GM12878 (cell line): ENCODE measurements at regions of chr17 and their contacts with region 1.

Region 1: GRCh38 chr17:4908301-4908700 is 5.4 kb upstream of the CHRNE start:
- DNase-seq: no peak
- ATAC-seq: no peak
- H3K4me3 ChIP-seq: no peak overlapping the region
- H3K27ac ChIP-seq: no peak overlapping the region
- H3K4me1 ChIP-seq: peaks cover 7% of the 10 kb centered on the region
- H3K27me3 ChIP-seq: no peaks in the 10 kb centered on the region; a peak in 1 of 4 replicates
- CTCF ChIP-seq: no peak
- EP300 ChIP-seq: no peak
- POLR2A ChIP-seq: no peak
- RAD21 ChIP-seq: no peak

Region 2: DNA sequence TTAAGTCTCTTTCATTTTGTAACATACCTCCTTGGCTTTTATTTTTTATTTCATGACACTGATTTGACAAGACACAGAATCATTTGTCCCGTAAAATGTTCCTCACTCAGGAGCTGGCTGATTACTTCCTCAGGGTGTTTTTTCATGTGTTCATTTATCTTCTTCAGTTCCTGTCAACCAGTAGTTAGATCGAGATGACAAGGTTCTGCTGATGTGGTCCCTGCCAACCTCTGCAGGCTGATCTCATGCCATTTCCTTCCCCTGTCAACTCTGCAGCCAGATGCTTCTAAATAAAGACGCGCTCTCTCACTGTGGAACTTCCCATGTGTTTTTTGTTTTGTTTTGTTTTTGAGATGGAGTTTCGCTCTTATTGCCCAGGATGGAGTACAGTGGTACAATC is 160.5 kb before region 1 on chr17:
- CTCF ChIA-PET with region 1: no interaction called
- POLR2A ChIA-PET with region 1: no interaction called
- RAD21 ChIA-PET with region 1: no interaction called
- SMC1A ChIA-PET with region 1: no interaction called
- in situ Hi-C with region 1: no loop called
- intact Hi-C with region 1: no loop called
- DNase-seq: no peak
- ATAC-seq: peak; percentile 64
- H3K4me3 ChIP-seq: no peak overlapping the region
- H3K27ac ChIP-seq: no peak overlapping the region
- H3K4me1 ChIP-seq: peaks cover 4% of the 10 kb centered on the region; the same call in 1 of the 2 replicates
- H3K27me3 ChIP-seq: no peaks in the 10 kb centered on the region
- CTCF ChIP-seq: no peak
- EP300 ChIP-seq: no peak
- POLR2A ChIP-seq: no peak
- RAD21 ChIP-seq: no peak

Region 3: DNA sequence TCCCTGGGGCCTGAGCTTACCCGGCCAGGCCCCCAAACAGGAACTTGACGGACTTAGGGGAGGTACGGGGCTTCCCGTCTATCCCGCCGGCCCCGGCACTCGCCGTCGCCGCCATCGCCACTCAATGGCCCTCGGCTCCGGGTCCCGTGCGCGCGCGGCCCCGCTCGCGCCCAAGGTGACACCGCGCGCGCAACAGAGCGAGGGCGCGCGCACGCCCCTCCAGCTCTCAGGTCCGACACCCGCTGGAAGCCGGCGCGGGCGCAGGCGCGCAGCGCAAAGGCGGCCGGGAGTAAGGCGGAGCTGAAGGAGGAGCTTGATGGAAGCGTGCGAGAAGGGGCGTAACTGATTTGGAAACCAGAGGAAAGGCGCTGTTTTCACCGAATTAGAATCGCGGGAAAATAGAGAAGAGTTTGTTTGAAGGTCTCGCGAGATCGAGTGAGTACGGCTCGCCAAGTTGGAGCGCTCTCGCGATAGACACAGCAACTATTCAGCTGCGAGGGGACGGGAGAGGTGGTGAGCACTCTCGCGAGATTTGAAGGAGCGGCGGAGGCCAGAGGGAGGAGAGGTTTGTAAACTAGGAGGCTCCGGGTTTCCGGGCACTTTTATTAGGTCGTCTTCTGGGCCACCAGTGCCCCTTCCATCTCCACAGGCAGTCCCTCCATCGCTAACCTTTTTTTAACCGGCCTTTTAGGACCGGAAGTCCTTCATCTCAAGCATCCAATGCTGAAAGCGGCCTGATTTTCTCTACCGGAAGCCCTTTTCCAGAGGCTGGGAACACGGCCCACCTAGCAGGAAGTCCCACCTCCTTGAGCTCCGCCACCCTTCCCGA is 31.7 kb after region 1 on chr17 and contains the starts of genes RNF167 and SLC25A11:
- CTCF ChIA-PET with region 1: interaction called, 18 read pairs
- POLR2A ChIA-PET with region 1: interaction called, 4 read pairs
- RAD21 ChIA-PET with region 1: interaction called, 14 read pairs
- SMC1A ChIA-PET with region 1: interaction called, 6 read pairs
- in situ Hi-C with region 1: no loop called
- intact Hi-C with region 1: no loop called
- DNase-seq: peak; percentile 100
- ATAC-seq: peak; percentile 83
- H3K4me3 ChIP-seq: peak within 1 kb of the TSS; percentile 92
- H3K27ac ChIP-seq: peak within 1 kb of the TSS; percentile 97
- H3K4me1 ChIP-seq: peaks cover 41% of the 10 kb centered on the region
- H3K27me3 ChIP-seq: no peaks in the 10 kb centered on the region
- CTCF ChIP-seq: no peak
- EP300 ChIP-seq: no peak
- POLR2A ChIP-seq: peak; percentile 88
- RAD21 ChIP-seq: no peak
- polyA plus RNA-seq, gene RNF167: 33.6 to 35.3 TPM
- polyA plus RNA-seq, gene SLC25A11: 5.8 to 10.9 TPM

Region 4: DNA sequence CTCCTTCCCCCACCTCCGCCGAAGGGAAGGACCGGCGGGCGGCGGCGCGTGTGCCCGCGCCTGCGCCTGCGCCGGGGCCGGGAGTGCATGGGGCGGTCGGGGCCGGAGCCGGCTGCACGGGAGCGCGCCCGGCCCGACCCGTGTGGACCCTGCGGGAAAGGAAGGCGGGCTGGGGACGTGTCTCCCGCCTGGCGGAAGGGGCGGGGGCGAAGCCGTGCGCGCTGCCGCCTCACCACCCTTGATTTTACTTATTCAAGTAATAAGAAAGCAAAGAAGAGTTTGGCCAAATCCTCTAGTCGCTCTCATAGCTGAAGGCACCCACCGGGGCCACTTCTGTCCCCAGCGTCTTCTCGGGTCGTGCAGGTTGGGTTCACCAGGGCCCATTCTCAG is 40.6 kb after region 1 on chr17:
- CTCF ChIA-PET with region 1: interaction called, 14 read pairs
- POLR2A ChIA-PET with region 1: no interaction called
- RAD21 ChIA-PET with region 1: interaction called, 4 read pairs
- SMC1A ChIA-PET with region 1: interaction called, 6 read pairs
- in situ Hi-C with region 1: no loop called
- intact Hi-C with region 1: no loop called
- DNase-seq: no peak
- ATAC-seq: peak; percentile 51
- H3K4me3 ChIP-seq: peak overlapping the region; percentile 96
- H3K27ac ChIP-seq: peak overlapping the region; percentile 85
- H3K4me1 ChIP-seq: peaks cover 33% of the 10 kb centered on the region
- H3K27me3 ChIP-seq: no peaks in the 10 kb centered on the region
- CTCF ChIP-seq: no peak
- EP300 ChIP-seq: no peak
- POLR2A ChIP-seq: no peak
- RAD21 ChIP-seq: no peak

Region 5: DNA sequence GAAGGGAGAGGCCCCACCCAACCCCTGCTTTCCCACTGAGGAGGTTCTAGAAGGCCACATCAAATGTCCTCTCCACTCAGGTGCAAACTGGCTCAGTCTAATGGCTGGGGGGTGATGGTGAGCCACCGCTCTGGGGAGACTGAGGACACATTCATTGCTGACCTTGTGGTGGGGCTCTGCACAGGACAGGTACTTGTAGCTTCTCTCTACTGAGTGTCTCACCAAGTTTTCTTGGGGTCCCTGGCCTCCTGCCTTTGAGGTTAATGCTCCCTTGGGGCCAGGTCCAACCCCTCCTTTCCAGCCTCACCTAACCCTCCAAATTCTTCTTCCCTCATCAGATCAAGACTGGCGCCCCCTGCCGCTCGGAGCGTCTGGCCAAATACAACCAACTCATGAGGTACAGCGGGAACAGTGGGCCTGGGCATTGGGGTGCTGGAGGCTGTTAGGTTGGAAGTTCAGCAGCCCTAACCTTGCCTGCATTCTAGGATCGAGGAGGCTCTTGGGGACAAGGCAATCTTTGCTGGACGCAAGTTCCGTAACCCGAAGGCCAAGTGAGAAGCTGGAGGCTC is 48.3 kb after region 1 on chr17:
- CTCF ChIA-PET with region 1: interaction called, 21 read pairs
- POLR2A ChIA-PET with region 1: no interaction called
- RAD21 ChIA-PET with region 1: interaction called, 3 read pairs
- SMC1A ChIA-PET with region 1: interaction called, 3 read pairs
- in situ Hi-C with region 1: no loop called
- intact Hi-C with region 1: no loop called
- DNase-seq: no peak
- ATAC-seq: peak; percentile 54; the same call in 2 of the 3 replicates
- H3K4me3 ChIP-seq: no peak overlapping the region
- H3K27ac ChIP-seq: no peak overlapping the region
- H3K4me1 ChIP-seq: peaks cover 3% of the 10 kb centered on the region
- H3K27me3 ChIP-seq: no peaks in the 10 kb centered on the region
- CTCF ChIP-seq: peak; percentile 33 to 54 (median 41)
- EP300 ChIP-seq: no peak
- POLR2A ChIP-seq: no peak
- RAD21 ChIP-seq: no peak

Region 6: DNA sequence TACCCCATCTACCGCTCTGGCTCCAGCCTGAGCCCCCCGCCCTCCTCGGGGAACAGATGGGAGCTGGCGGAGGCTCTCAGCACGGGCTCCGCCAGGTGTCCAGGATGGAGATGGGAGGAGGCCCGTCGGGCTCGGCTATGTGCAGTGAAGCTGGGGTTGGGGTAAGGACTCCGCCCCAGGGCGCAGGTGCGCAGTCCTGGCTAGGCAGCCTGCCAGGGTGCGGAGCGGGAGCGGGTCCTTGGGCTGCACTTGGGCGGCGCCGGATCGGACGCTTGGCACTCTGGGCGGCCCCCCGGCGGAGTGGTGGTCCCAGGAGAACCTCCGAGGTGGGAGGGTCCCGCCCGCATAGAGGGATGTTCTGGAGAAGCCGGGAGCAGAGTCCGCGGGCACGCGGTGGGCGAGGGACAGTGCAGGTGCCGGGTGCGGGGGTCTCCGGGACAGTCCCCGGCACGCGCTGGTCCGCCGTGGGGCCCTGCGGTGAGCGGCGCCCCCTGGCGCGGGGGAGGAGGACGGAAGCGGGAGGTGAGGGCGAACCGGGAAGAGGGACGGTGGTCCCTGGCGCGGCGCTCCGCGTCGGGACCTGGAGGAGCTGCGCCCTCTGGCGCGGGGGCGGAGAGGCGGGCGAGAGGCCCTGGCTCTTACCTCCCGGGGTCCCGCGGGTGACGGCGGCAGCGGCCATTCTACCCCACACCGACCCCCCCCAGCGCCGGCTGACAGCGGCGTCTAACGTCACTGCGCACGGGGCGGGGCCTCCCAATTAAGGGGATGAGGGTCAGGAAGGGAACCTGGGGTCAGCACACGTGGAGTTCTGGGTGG is 78.9 kb after region 1 on chr17 and contains the start of gene CAMTA2:
- CTCF ChIA-PET with region 1: interaction called, 19 read pairs
- POLR2A ChIA-PET with region 1: interaction called, 3 read pairs
- RAD21 ChIA-PET with region 1: interaction called, 4 read pairs
- SMC1A ChIA-PET with region 1: interaction called, 4 read pairs
- in situ Hi-C with region 1: no loop called
- intact Hi-C with region 1: no loop called
- DNase-seq: no peak
- ATAC-seq: peak; percentile 92
- H3K4me3 ChIP-seq: peak within 1 kb of the TSS; percentile 74
- H3K27ac ChIP-seq: peak within 1 kb of the TSS; percentile 90
- H3K4me1 ChIP-seq: peaks cover 19% of the 10 kb centered on the region
- H3K27me3 ChIP-seq: no peaks in the 10 kb centered on the region
- CTCF ChIP-seq: peak; percentile 61 to 66 (median 66); a peak in 5 of 6 replicates
- EP300 ChIP-seq: no peak
- POLR2A ChIP-seq: peak; percentile 89
- RAD21 ChIP-seq: peak; percentile 33
- polyA plus RNA-seq, gene CAMTA2: 0.42 to 1.7 TPM